OCI-LY7 (cell line): ENCODE measurements at regions of chr4 and their contacts with region 1.

Region 1: DNA sequence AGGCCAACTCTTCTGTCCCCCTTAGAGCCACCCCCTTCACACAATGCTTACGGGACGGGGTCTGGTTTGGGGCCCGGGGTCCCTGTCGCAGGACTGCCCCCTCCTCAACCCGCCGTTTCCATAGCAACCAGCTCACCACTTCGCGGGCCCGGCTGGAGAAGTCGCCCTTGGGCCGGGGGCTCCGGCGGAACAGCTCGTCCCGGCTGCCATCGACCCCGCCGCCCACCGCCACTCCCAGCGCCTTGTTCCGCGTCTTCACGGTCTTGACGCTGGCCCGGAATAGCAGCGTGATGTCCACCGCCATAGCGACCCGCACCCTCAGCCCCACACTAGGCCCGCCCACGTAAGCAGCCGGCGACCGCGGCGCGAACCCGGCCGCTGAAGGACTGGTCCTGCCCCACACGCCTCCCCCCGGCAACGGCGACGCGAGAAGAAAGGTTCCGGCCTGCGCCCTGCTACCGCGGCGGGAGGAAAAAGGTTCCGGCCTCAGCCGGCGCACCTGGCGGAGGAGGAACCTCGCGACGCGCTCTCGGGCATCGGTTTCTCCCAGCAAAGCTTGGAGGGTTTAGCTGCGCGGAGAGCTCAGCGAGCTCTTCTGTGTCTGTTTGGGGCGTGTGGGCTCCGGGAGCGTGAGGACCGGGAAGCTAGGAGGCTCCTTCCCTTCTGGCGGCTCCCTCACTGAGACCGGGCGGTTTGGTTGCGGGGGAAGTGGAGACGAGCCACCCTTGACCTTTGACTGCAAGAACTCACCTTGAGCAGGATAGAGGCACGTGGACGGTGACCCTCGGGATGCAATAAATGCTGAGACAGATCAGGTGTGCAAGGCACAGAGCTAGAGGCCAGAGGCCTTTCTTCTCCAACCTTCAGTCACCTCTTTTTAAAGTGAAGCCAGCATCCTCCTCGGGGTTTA is at the start of gene STX18:
- DNase-seq: peak; percentile 90
- H3K4me3 ChIP-seq: peak within 1 kb of the TSS; percentile 86
- H3K27ac ChIP-seq: peak within 1 kb of the TSS; percentile 65
- H3K4me1 ChIP-seq: peaks cover 33% of the 10 kb centered on the region
- CTCF ChIP-seq: no peak
- total RNA-seq, gene STX18: 27.5 and 30.6 TPM in 2 replicates

Region 2: GRCh38 chr4:4260253-4260652 is 281.7 kb before region 1 on chr4:
- CTCF ChIA-PET with region 1: no interaction called
- POLR2A ChIA-PET with region 1: interaction called, 3 read pairs
- intact Hi-C with region 1: loop called (anchors 10 kb)
- DNase-seq: peak; percentile 87
- H3K4me3 ChIP-seq: no peak overlapping the region
- H3K27ac ChIP-seq: no peak overlapping the region
- H3K4me1 ChIP-seq: peaks cover 3% of the 10 kb centered on the region
- CTCF ChIP-seq: peak; percentile 97

Region 3: GRCh38 chr4:4524364-4524763 is 17.6 kb before region 1 on chr4:
- CTCF ChIA-PET with region 1: interaction called, 4 read pairs
- POLR2A ChIA-PET with region 1: interaction called, 30 read pairs
- intact Hi-C with region 1: no loop called
- DNase-seq: peak; percentile 82
- H3K4me3 ChIP-seq: peak overlapping the region; percentile 22
- H3K27ac ChIP-seq: peak overlapping the region; percentile 26
- H3K4me1 ChIP-seq: peaks cover 18% of the 10 kb centered on the region
- CTCF ChIP-seq: peak; percentile 65